T-cell (primary cell): ENCODE measurements at regions of chr2 and their contacts with region 1.

Region 1: DNA sequence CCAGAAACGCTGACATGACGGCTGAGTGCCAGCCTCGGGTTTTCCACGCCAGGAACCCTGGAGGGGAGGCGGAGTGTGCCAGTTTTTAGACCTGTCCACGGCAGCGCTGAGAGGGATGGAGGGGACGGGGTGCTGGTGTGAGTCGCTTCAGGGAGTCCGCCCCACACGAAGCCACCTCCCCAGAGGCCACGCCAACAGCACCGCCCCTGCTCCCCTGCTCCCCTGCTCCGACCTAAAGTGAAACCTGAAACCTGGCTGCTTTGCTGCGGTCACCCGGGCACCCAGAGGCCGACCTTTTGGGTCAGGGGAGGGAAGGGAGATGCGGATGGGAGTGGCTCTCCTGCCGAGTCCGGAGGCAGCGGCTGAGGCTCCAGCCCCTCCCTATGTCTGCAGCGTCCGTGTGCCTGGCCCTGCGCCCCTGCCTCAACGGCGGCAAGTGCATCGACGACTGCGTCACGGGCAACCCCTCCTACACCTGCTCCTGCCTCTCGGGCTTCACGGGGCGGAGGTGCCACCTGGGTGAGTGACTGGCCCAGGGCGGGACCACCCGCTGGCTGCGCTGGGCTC is 38.1 kb downstream of the SNED1 start:
- DNase-seq: peak; percentile 28 to 77 (median 59)
- ATAC-seq: peak; percentile 66 to 80 (median 77)
- H3K4me3 ChIP-seq: peak overlapping the region; percentile 59 to 67
- H3K4me3 Mint-ChIP-seq: peak overlapping the region; percentile 72 to 82 (median 81)
- H3K27ac ChIP-seq: peak overlapping the region; percentile 47
- H3K27ac Mint-ChIP-seq: peak overlapping the region in 1 of 2 donors; percentile 79
- H3K4me1 ChIP-seq: peaks cover 0 to 50% of the 10 kb centered on the region in 2 experiments
- H3K4me1 Mint-ChIP-seq: peaks cover 6 to 39% (median 30%) of the 10 kb centered on the region in 3 donors
- H3K27me3 ChIP-seq: peaks cover 0 to 44% of the 10 kb centered on the region in 2 experiments
- H3K27me3 Mint-ChIP-seq: no peaks in the 10 kb centered on the region

Region 2: DNA sequence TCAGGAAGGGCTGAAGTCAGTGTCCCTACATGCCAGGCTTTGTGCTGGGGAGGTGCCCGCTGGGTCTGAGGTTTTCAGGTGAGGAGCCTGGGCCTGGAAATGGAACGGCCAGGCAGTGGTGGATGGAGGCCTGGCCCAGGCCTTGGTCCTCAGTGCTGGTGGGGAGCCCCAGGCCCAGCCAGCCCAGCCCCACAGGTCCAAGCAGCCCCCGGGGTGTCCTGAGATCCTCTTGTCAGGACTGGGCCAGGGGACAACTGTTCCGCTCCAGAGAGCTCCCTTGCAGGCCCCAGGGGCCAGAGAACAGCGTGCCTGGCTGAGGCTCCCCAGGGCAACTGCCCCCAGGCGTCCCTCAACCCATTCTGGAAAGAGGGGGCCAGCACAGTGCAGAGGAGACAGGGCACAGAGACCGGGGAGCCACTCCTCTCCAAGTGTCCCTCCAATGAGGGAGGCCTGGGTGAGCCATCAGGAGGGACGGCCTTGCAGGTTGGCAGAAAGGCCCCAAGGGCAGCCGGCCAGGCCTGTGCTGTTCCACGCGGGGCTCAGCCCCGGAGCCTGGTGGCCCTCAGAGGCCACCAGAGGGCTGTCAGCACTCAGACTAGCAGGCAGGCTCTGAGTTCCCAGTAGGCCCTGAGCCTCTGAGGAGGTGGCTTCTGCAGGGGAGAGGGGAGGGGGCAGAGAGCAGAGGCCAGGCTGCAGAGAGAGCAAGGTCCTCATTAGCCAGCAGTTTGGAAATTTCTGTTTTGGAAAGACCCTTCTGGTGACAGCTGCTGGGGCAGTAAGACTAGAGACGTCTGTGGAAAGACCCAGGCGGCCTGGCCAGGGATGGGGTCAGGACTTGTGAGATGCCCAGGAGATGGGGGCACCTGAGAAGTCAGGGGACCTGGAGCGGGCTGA is 67.5 kb before region 1 on chr2:
- CTCF ChIA-PET with region 1: no interaction called
- POLR2A ChIA-PET with region 1: no interaction called
- DNase-seq: no peak
- ATAC-seq: no peak
- H3K4me3 ChIP-seq: no peak overlapping the region
- H3K4me3 Mint-ChIP-seq: no peak overlapping the region
- H3K27ac ChIP-seq: no peak overlapping the region
- H3K27ac Mint-ChIP-seq: no peak overlapping the region
- H3K4me1 ChIP-seq: no peaks in the 10 kb centered on the region
- H3K4me1 Mint-ChIP-seq: peaks cover 0 to 3% (median 3%) of the 10 kb centered on the region in 3 donors
- H3K27me3 ChIP-seq: peaks cover 0 to 41% of the 10 kb centered on the region in 2 experiments
- H3K27me3 Mint-ChIP-seq: peaks cover 5 to 6% of the 10 kb centered on the region in 2 donors

Region 3: GRCh38 chr2:241048149-241048948 is 11.9 kb after region 1 on chr2:
- CTCF ChIA-PET with region 1: interaction called in 1 of 2 experiments, 11 read pairs
- POLR2A ChIA-PET with region 1: no interaction called
- DNase-seq: peak in 1 of 35 experiments; percentile 12
- ATAC-seq: no peak
- H3K4me3 ChIP-seq: no peak overlapping the region
- H3K4me3 Mint-ChIP-seq: no peak overlapping the region
- H3K27ac ChIP-seq: no peak overlapping the region
- H3K27ac Mint-ChIP-seq: no peak overlapping the region
- H3K4me1 ChIP-seq: peaks cover 0 to 4% of the 10 kb centered on the region in 2 experiments
- H3K4me1 Mint-ChIP-seq: no peaks in the 10 kb centered on the region
- H3K27me3 ChIP-seq: peaks cover 0 to 15% of the 10 kb centered on the region in 2 experiments
- H3K27me3 Mint-ChIP-seq: no peaks in the 10 kb centered on the region